ENCODE measurements at regions of chr3 and their contacts with region 1.

Region 1: GRCh38 chr3:120095226-120095978 is 1.2 kb upstream of the GSK3B start:
- DNase-seq: peak; percentile 88 to 90
- ATAC-seq: peak; percentile 24 to 50 (median 32)
- H3K4me3 ChIP-seq: peak overlapping the region; percentile 57
- H3K4me3 Mint-ChIP-seq: no peak overlapping the region
- H3K27ac ChIP-seq: peak overlapping the region; percentile 86
- H3K27ac Mint-ChIP-seq: no peak overlapping the region
- H3K4me1 ChIP-seq: peaks cover 6% of the 10 kb centered on the region
- H3K4me1 Mint-ChIP-seq: peaks cover 23 to 25% of the 10 kb centered on the region in 2 donors
- H3K27me3 ChIP-seq: no peaks in the 10 kb centered on the region
- H3K27me3 Mint-ChIP-seq: no peaks in the 10 kb centered on the region
- CTCF ChIP-seq: no peak

Region 2: GRCh38 chr3:119293871-119294695 is 801.3 kb before region 1 on chr3 and contains the start of gene ARHGAP31:
- intact Hi-C with region 1: loop called (anchors 10 kb)
- DNase-seq: peak; percentile 81 to 94
- ATAC-seq: peak; percentile 65 to 82 (median 70)
- H3K4me3 ChIP-seq: peak within 1 kb of the TSS; percentile 82
- H3K4me3 Mint-ChIP-seq: peak within 1 kb of the TSS; percentile 95
- H3K27ac ChIP-seq: peak within 1 kb of the TSS; percentile 99
- H3K27ac Mint-ChIP-seq: peak within 1 kb of the TSS; percentile 95 to 97
- H3K4me1 ChIP-seq: peaks cover 60% of the 10 kb centered on the region
- H3K4me1 Mint-ChIP-seq: peaks cover 72 to 74% of the 10 kb centered on the region in 2 donors
- H3K27me3 ChIP-seq: peaks cover 9% of the 10 kb centered on the region
- H3K27me3 Mint-ChIP-seq: peaks cover 9 to 15% of the 10 kb centered on the region in 2 donors
- CTCF ChIP-seq: no peak
- total RNA-seq, gene ARHGAP31: 4.1 to 8.4 (median 8.4) TPM

Region 3: GRCh38 chr3:119463171-119464169 is 631.9 kb before region 1 on chr3 and contains the start of gene TMEM39A:
- intact Hi-C with region 1: loop called (anchors 1 kb)
- DNase-seq: peak; percentile 100
- ATAC-seq: peak; percentile 89 to 96 (median 90)
- H3K4me3 ChIP-seq: peak within 1 kb of the TSS; percentile 67
- H3K4me3 Mint-ChIP-seq: peak within 1 kb of the TSS; percentile 91
- H3K27ac ChIP-seq: peak within 1 kb of the TSS; percentile 100
- H3K27ac Mint-ChIP-seq: peak within 1 kb of the TSS; percentile 96 to 99
- H3K4me1 ChIP-seq: peaks cover 20% of the 10 kb centered on the region
- H3K4me1 Mint-ChIP-seq: peaks cover 35 to 48% of the 10 kb centered on the region in 2 donors
- H3K27me3 ChIP-seq: no peaks in the 10 kb centered on the region
- H3K27me3 Mint-ChIP-seq: no peaks in the 10 kb centered on the region
- CTCF ChIP-seq: no peak
- total RNA-seq, gene TMEM39A: 64.2 to 76.5 (median 64.7) TPM

Region 4: GRCh38 chr3:119937229-119937628 is 158.2 kb before region 1 on chr3:
- intact Hi-C with region 1: loop called (anchors 10 kb)
- DNase-seq: peak; percentile 22 to 59
- ATAC-seq: peak; percentile 84 to 98 (median 95)
- H3K4me3 ChIP-seq: no peak overlapping the region
- H3K4me3 Mint-ChIP-seq: peak overlapping the region; percentile 62
- H3K27ac ChIP-seq: no peak overlapping the region
- H3K27ac Mint-ChIP-seq: peak overlapping the region; percentile 8 to 10
- H3K4me1 ChIP-seq: peaks cover 3% of the 10 kb centered on the region
- H3K4me1 Mint-ChIP-seq: peaks cover 54 to 62% of the 10 kb centered on the region in 2 donors
- H3K27me3 ChIP-seq: no peaks in the 10 kb centered on the region
- H3K27me3 Mint-ChIP-seq: no peaks in the 10 kb centered on the region
- CTCF ChIP-seq: no peak

Region 5: GRCh38 chr3:120348981-120349818 is 253.8 kb after region 1 on chr3 and contains the start of gene LRRC58:
- intact Hi-C with region 1: loop called (anchors 10 kb)
- DNase-seq: peak; percentile 90 to 95
- ATAC-seq: peak; percentile 93 to 97 (median 94)
- H3K4me3 ChIP-seq: peak within 1 kb of the TSS; percentile 97
- H3K4me3 Mint-ChIP-seq: peak within 1 kb of the TSS; percentile 91
- H3K27ac ChIP-seq: peak within 1 kb of the TSS; percentile 75
- H3K27ac Mint-ChIP-seq: peak within 1 kb of the TSS; percentile 80 to 87
- H3K4me1 ChIP-seq: peaks cover 13% of the 10 kb centered on the region
- H3K4me1 Mint-ChIP-seq: peaks cover 42 to 46% of the 10 kb centered on the region in 2 donors
- H3K27me3 ChIP-seq: no peaks in the 10 kb centered on the region
- H3K27me3 Mint-ChIP-seq: peaks cover 6 to 21% of the 10 kb centered on the region in 2 donors
- CTCF ChIP-seq: no peak
- total RNA-seq, gene LRRC58: 17.0 to 21.8 (median 18.2) TPM

Region 6: DNA sequence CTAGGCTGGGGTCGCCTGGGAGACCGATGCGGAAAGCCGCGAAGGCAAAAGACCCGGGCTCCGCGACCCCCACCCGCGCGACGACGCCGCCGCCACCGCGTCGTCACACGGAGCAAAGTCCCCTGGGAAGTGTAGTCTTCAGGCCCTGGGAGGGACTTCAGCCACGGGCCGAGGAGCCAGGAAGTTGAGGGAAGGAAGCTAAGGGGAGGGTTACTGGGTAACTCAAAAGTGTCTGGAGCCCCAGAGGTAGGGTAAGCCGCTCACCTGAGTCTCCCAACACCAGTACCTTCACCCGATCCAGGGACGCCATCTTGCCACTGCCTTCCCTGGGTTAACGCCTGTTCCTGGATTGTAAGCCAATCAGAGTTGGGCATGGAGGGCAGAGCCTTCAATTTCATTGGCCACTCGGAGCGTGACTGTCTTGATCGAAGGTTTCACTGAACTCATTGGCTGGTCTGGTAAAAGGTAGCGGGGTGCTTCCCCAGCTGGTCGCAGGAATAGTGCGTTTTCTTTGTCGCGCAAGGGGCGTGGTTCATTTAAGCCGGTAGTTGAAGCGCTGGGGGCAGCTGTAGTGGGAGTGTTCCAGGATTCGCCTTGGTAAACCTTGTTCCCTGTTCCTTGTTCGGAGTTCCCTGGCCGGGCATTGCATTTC is 646.9 kb after region 1 on chr3 and contains the starts of genes GTF2E1 and RABL3:
- intact Hi-C with region 1: loop called (anchors 1 kb)
- DNase-seq: peak; percentile 97 to 99
- ATAC-seq: peak; percentile 94 to 99 (median 96)
- H3K4me3 ChIP-seq: peak within 1 kb of the TSS; percentile 91
- H3K4me3 Mint-ChIP-seq: peak within 1 kb of the TSS; percentile 95
- H3K27ac ChIP-seq: peak within 1 kb of the TSS; percentile 100
- H3K27ac Mint-ChIP-seq: peak within 1 kb of the TSS; percentile 97 to 99
- H3K4me1 ChIP-seq: peaks cover 14% of the 10 kb centered on the region
- H3K4me1 Mint-ChIP-seq: peaks cover 34 to 41% of the 10 kb centered on the region in 2 donors
- H3K27me3 ChIP-seq: no peaks in the 10 kb centered on the region
- H3K27me3 Mint-ChIP-seq: no peaks in the 10 kb centered on the region
- CTCF ChIP-seq: no peak
- total RNA-seq, gene GTF2E1: 10.9 to 15.7 (median 12.7) TPM
- total RNA-seq, gene RABL3: 11.7 to 18.4 (median 16.7) TPM

Measured in natural killer cell (primary cell).